AG04450 (cell line): ENCODE measurements at regions of chr1 and their contacts with region 1.

Region 1: DNA sequence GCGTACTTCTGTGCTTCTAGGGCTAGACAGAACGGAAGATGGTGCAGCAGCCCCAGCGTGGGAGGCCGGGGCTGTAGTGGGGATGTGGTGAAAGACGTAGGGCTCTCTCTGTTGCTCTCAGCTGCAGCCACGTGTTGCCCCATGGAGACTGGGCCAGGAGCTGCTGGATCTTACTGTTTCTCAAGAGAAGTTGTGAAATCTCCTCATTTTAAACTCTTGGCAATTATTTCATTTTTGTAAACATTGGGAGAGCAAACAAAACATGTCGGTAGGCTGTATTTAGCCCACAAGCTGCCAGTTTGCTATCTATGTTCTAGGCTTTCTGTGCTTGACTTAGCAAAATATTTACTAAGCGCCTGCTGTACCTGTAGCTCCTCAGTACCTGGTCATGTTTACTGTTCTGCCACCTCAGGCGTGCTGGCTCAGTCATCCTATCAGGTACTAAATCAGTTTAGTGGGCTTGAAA is 15.9 kb upstream of the ELOA start:
- DNase-seq: peak; percentile 83
- H3K4me3 ChIP-seq: no peak overlapping the region
- H3K27ac ChIP-seq: peak overlapping the region; percentile 73
- H3K27me3 ChIP-seq: no peaks in the 10 kb centered on the region
- CTCF ChIP-seq: no peak

Region 2: DNA sequence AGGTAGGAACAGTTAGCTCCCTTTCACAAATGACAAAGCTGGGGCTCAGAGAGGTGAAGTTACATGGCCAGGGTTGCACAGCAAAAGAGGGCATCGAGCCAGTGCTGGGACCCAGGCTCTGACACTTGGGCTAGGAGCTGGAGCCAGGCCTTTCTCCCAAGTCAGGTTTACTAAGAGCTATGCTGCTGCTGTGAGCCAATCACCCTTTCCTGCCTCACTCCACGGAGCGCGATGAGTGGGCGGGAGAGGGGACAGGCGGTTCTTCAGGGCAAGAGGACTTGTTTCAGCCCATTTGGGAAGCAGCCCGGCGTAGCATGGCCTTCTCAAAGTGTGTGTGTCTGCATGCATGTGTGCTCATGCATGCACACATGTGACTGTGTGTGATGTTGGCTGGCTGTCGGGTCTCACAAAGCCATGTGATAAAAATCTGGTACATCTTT is 178.7 kb before region 1 on chr1:
- CTCF ChIA-PET with region 1: interaction called, 15 read pairs
- POLR2A ChIA-PET with region 1: no interaction called
- DNase-seq: no peak
- H3K4me3 ChIP-seq: no peak overlapping the region
- H3K27ac ChIP-seq: no peak overlapping the region
- H3K27me3 ChIP-seq: no peaks in the 10 kb centered on the region
- CTCF ChIP-seq: no peak

Region 3: GRCh38 chr1:23691499-23692307 is 35.7 kb before region 1 on chr1 and contains the start of gene RPL11:
- CTCF ChIA-PET with region 1: interaction called, 5 read pairs
- POLR2A ChIA-PET with region 1: interaction called, 13 read pairs
- DNase-seq: peak; percentile 94
- H3K4me3 ChIP-seq: peak within 1 kb of the TSS; percentile 91
- H3K27ac ChIP-seq: peak within 1 kb of the TSS; percentile 87
- H3K27me3 ChIP-seq: no peaks in the 10 kb centered on the region
- CTCF ChIP-seq: peak; percentile 80
- polyA plus RNA-seq, gene RPL11: 1,898 and 2,055 TPM in 2 replicates